Caco-2 (cell line): ENCODE measurements at regions of chr16 and their contacts with region 1.

Region 1: DNA sequence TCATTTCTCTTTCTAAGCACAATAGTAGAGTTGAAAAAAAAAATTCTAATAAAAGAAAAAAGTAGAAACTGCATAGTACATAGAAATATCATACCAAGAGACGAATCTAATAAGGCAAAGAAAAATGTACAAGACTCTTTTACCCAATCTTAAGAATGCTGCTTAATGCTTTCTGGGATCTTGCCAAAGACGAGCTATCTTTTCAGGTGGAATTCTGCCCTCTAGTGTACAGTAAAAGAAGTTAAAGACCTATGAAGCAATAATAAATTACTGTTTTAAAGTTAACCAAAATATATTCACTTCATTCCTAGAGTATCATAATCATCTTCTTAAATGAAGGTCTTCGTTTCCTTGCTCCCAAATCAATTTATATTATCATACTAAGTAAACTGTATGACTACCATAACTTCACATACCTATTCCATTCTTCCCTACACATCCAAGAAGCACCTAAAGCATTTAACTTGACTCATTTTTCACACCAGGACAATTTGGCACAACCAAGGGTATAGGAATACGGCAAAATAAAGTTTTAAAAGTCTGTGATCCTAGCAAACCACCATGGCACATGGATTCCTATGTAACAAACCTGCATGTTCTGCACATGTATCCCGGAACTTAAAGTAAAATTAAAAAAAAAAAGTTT is 47.7 kb downstream of the CFDP1 start:
- DNase-seq: peak in 1 of 2 experiments; percentile 37
- H3K4me3 ChIP-seq: no peak overlapping the region
- H3K4me3 Mint-ChIP-seq: no peak overlapping the region
- H3K27ac Mint-ChIP-seq: no peak overlapping the region
- H3K4me1 ChIP-seq: no peaks in the 10 kb centered on the region
- H3K4me1 Mint-ChIP-seq: no peaks in the 10 kb centered on the region
- H3K27me3 ChIP-seq: no peaks in the 10 kb centered on the region
- H3K27me3 Mint-ChIP-seq: no peaks in the 10 kb centered on the region
- CTCF ChIP-seq: peak; percentile 62 to 65

Region 2: GRCh38 chr16:75251280-75252048 is 134.2 kb before region 1 on chr16 and contains the start of gene BCAR1:
- CTCF ChIA-PET with region 1: interaction called, 10 read pairs
- POLR2A ChIA-PET with region 1: no interaction called
- intact Hi-C with region 1: loop called (anchors 5 kb)
- DNase-seq: peak; percentile 94 to 97
- H3K4me3 ChIP-seq: peak within 1 kb of the TSS; percentile 96
- H3K4me3 Mint-ChIP-seq: peak within 1 kb of the TSS; percentile 96
- H3K27ac Mint-ChIP-seq: peak within 1 kb of the TSS; percentile 89
- H3K4me1 ChIP-seq: peaks cover 67% of the 10 kb centered on the region
- H3K4me1 Mint-ChIP-seq: peaks cover 47% of the 10 kb centered on the region
- H3K27me3 ChIP-seq: no peaks in the 10 kb centered on the region
- H3K27me3 Mint-ChIP-seq: no peaks in the 10 kb centered on the region
- CTCF ChIP-seq: no peak
- total RNA-seq, gene BCAR1: 94.0 and 95.5 TPM in 2 replicates

Region 3: DNA sequence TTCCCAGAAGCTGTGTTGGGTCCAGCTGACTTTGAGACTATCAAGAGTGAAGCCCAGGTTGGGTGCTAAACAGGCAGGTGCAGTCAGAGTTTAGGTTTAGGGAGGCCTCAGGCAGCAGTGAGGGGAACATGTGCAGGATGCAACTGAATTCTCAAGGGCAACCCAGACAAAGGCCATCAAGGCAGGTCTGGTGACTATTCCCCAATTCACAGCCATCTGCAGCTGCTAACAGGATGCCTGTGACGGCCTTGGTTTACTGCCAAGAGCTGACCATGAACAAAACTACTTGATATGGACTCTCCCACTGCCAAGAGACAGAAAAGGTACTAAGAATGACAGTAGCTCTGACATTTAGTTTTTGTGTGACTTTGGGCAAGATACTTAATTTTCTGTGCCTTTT is 89.0 kb before region 1 on chr16:
- CTCF ChIA-PET with region 1: no interaction called
- POLR2A ChIA-PET with region 1: no interaction called
- intact Hi-C with region 1: no loop called
- DNase-seq: no peak
- H3K4me3 ChIP-seq: no peak overlapping the region
- H3K4me3 Mint-ChIP-seq: no peak overlapping the region
- H3K27ac Mint-ChIP-seq: no peak overlapping the region
- H3K4me1 ChIP-seq: no peaks in the 10 kb centered on the region
- H3K4me1 Mint-ChIP-seq: no peaks in the 10 kb centered on the region
- H3K27me3 ChIP-seq: no peaks in the 10 kb centered on the region
- H3K27me3 Mint-ChIP-seq: no peaks in the 10 kb centered on the region
- CTCF ChIP-seq: no peak

Region 4: GRCh38 chr16:75632857-75633256 is 247.2 kb after region 1 on chr16:
- CTCF ChIA-PET with region 1: interaction called, 11 read pairs
- POLR2A ChIA-PET with region 1: no interaction called
- intact Hi-C with region 1: no loop called
- DNase-seq: peak in 1 of 2 experiments; percentile 53
- H3K4me3 ChIP-seq: no peak overlapping the region
- H3K4me3 Mint-ChIP-seq: no peak overlapping the region
- H3K27ac Mint-ChIP-seq: no peak overlapping the region
- H3K4me1 ChIP-seq: peaks cover 3% of the 10 kb centered on the region; the same call in 1 of the 2 replicates
- H3K4me1 Mint-ChIP-seq: no peaks in the 10 kb centered on the region
- H3K27me3 ChIP-seq: no peaks in the 10 kb centered on the region
- H3K27me3 Mint-ChIP-seq: no peaks in the 10 kb centered on the region
- CTCF ChIP-seq: no peak